ENCODE measurements at regions of chr15 and their contacts with region 1.

Region 1: DNA sequence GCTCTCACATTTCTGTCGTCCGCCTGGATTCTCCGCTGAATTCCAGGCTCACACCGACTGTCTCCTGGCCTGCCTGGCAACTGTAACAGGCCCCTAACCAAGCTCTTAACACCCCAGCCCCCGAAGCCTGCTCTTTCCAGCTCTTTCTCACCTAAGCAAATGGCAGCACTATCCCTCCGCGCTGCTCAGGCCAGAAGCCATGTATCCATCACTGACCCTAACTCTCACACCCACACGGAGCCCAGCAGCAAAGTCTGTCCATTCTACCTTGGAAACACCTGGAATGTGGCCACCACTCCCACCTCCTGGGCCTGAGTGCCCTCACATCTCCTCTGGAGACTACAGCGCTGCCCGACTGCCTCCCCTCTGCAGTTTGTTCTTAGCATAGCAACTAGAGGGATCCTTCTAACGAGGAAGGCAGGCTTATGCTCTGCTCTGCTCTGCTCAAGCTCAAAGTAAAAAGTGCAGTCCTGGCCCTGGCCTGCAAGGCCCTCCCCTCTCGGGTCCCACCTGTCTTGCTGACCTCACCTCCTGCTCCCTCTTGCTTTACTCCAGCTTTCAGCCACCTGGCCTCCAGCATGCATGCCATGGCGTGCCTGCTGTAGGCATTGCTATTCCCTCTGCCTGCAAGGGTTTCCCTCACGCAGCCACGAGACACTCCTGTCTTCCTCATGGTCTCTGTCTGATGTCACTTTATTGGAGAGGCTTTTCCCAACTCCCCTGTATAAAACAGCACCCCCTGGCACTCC is 27.2 kb downstream of the FEM1B start:
- DNase-seq: no peak
- H3K4me3 Mint-ChIP-seq: no peak overlapping the region
- H3K27ac Mint-ChIP-seq: no peak overlapping the region
- H3K4me1 Mint-ChIP-seq: peaks cover 13% of the 10 kb centered on the region
- H3K27me3 Mint-ChIP-seq: peaks cover 33% of the 10 kb centered on the region
- CTCF ChIP-seq: no peak

Region 2: DNA sequence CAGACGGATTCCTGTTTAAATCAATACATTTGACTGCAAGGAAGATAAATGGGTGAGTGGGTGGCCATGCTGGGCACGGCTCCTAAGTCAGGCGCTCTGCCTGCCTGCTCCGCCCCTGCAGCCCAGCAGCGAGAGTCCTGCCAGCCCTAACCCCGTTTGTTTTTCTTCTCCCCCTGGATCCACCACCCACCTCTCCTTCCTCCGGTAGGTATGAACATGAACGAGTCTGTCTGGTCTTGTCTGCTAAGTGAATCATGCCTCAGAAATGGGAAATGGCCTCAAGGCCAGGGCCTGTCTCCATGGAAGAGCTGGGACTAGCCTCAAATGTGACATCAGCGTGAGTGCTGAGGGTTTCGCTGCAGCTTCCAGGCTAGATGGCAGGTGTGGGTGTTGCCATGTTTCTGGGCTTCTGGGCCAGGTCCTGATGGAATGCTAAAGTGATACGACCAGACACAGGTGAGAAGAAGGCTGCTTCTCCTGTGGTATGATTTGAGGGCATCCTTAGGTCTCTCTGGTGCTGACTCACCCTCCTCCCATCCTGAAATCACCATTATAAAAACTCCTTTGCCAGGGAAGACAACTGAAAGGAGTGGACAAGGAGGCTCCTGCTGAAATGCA is 32.8 kb before region 1 on chr15:
- CTCF ChIA-PET with region 1: no interaction called
- intact Hi-C with region 1: no loop called
- DNase-seq: peak; percentile 63
- H3K4me3 Mint-ChIP-seq: peak overlapping the region; percentile 67
- H3K27ac Mint-ChIP-seq: peak overlapping the region; percentile 75
- H3K4me1 Mint-ChIP-seq: peaks cover 59% of the 10 kb centered on the region
- H3K27me3 Mint-ChIP-seq: no peaks in the 10 kb centered on the region
- CTCF ChIP-seq: no peak

Region 3: GRCh38 chr15:68383161-68384074 is 78.7 kb after region 1 on chr15:
- CTCF ChIA-PET with region 1: interaction called, 4 read pairs
- intact Hi-C with region 1: loop called (anchors 1 kb)
- DNase-seq: peak; percentile 61
- H3K4me3 Mint-ChIP-seq: no peak overlapping the region
- H3K27ac Mint-ChIP-seq: no peak overlapping the region
- H3K4me1 Mint-ChIP-seq: no peaks in the 10 kb centered on the region
- H3K27me3 Mint-ChIP-seq: peaks cover 57% of the 10 kb centered on the region
- CTCF ChIP-seq: peak; percentile 64

Region 4: DNA sequence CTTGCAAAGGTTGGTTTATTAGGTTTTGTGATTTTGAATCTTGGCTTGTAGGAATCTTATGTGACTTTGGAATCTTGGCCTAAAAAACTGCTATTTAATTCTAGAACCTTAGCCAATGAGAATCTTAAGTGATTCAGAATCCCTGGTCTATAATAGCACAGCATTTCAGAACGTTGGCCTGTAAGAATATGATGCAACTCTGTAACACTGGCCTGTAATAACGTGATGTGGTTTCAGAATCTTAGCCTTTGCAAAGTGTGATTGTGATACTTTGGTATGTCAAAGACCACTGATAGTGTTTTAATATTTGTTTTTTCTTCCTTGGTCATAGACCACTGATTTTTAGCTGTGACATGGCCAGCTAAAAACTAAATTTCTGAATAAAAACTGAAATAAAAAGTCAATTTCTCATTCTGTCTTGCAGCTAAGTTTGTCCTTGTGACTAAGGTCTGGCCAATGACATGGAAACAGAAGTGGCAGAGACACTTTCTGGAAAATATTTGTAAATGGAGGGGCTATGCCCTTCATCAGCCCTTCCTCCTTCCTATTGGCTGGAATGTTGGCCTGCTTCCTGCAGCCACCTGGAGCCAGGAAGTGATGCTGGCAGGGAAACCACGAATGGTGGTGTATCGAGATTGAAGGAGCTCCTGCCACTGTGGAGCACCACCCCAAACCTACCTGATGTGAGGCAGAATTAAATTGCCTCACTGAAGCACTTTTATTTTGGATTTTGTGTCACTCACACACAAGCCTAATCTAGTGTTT is 231.8 kb after region 1 on chr15:
- CTCF ChIA-PET with region 1: interaction called, 13 read pairs
- intact Hi-C with region 1: loop called (anchors 5 kb)
- DNase-seq: no peak
- H3K4me3 Mint-ChIP-seq: no peak overlapping the region
- H3K27ac Mint-ChIP-seq: no peak overlapping the region
- H3K4me1 Mint-ChIP-seq: no peaks in the 10 kb centered on the region
- H3K27me3 Mint-ChIP-seq: peaks cover 51% of the 10 kb centered on the region
- CTCF ChIP-seq: no peak

Region 5: GRCh38 chr15:68550481-68551295 is 245.9 kb after region 1 on chr15:
- CTCF ChIA-PET with region 1: interaction called, 8 read pairs
- intact Hi-C with region 1: loop called (anchors 5 kb)
- DNase-seq: peak; percentile 85
- H3K4me3 Mint-ChIP-seq: no peak overlapping the region
- H3K27ac Mint-ChIP-seq: no peak overlapping the region
- H3K4me1 Mint-ChIP-seq: no peaks in the 10 kb centered on the region
- H3K27me3 Mint-ChIP-seq: peaks cover 72% of the 10 kb centered on the region
- CTCF ChIP-seq: peak; percentile 95

Region 6: GRCh38 chr15:68672781-68673205 is 368.0 kb after region 1 on chr15:
- CTCF ChIA-PET with region 1: interaction called, 15 read pairs
- intact Hi-C with region 1: loop called (anchors 5 kb)
- DNase-seq: no peak
- H3K4me3 Mint-ChIP-seq: no peak overlapping the region
- H3K27ac Mint-ChIP-seq: no peak overlapping the region
- H3K4me1 Mint-ChIP-seq: peaks cover 9% of the 10 kb centered on the region
- H3K27me3 Mint-ChIP-seq: peaks cover 80% of the 10 kb centered on the region
- CTCF ChIP-seq: peak; percentile 21

Region 7: DNA sequence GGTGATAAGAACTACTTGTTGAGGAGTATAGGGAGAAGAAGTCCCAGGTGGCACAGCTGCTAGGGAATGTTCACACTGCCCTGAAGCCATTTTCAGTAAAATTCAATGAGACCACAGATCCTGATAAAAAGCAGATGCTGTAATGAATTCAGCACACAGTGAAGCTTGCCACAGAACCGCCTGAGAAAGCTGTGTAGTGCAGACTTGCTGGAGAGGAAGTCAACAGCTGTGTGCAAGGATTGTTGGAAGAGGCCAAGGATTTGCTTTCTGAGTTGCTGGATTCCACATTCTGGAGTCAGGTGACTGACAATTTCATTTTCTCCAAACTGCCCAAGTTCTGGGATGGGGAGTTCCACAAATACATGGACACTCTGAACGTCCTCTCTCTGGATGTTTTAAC is 445.0 kb after region 1 on chr15:
- CTCF ChIA-PET with region 1: interaction called, 11 read pairs
- intact Hi-C with region 1: no loop called
- DNase-seq: no peak
- H3K4me3 Mint-ChIP-seq: no peak overlapping the region
- H3K27ac Mint-ChIP-seq: no peak overlapping the region
- H3K4me1 Mint-ChIP-seq: peaks cover 4% of the 10 kb centered on the region
- H3K27me3 Mint-ChIP-seq: peaks cover 29% of the 10 kb centered on the region
- CTCF ChIP-seq: no peak